CD4-positive, alpha-beta memory T cell (primary cell): ENCODE measurements at regions of chr17 and their contacts with region 1.

Region 1: DNA sequence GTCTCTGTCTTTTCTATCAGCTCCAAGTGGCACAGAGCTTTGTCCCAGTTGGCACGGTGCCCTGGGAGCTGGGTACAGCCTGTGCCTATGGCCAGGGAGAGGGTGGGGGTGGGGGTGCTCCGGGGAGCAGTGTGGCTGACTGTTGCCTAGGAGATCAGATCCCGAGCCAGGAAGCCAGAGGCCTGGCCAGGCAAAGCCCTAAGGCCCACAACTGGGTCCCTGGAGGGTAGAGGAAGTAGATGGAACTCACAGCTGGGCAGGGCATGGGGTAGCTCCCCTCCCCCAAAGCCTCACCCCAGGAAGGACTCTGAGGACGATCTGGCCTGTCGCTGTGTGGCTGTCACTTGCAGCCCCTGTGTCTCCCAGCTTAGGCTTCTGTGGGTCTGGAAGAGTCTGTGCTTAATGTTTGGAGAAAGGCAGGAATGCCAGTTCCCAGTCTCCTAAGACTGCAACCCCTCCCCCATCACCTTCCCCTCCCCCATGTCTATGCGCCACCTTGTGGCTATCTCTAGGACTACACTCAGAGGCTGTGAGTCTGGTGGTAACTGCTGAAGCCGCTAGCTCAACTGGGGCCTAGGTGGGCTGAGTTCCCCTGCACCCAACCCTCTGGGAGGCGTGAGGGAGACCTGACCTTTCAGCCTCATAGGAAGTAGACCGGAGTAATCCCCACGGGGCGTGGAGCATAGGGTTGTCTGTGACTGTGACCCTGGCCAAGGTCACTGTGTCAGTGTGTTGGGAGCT is 12.6 kb downstream of the THRA start:
- DNase-seq: peak; percentile 59 to 71 (median 63)
- H3K4me3 ChIP-seq: no peak overlapping the region
- H3K4me3 Mint-ChIP-seq: peak overlapping the region in 7 of 8 donors; percentile 17 to 80 (median 35)
- H3K27ac ChIP-seq: peak overlapping the region; percentile 8
- H3K27ac Mint-ChIP-seq: peak overlapping the region; percentile 60 to 93 (median 77)
- H3K4me1 ChIP-seq: peaks cover 38% of the 10 kb centered on the region
- H3K4me1 Mint-ChIP-seq: peaks cover 20 to 45% (median 33%) of the 10 kb centered on the region in 4 donors
- H3K27me3 ChIP-seq: no peaks in the 10 kb centered on the region
- H3K27me3 Mint-ChIP-seq: no peaks in the 10 kb centered on the region

Region 2: DNA sequence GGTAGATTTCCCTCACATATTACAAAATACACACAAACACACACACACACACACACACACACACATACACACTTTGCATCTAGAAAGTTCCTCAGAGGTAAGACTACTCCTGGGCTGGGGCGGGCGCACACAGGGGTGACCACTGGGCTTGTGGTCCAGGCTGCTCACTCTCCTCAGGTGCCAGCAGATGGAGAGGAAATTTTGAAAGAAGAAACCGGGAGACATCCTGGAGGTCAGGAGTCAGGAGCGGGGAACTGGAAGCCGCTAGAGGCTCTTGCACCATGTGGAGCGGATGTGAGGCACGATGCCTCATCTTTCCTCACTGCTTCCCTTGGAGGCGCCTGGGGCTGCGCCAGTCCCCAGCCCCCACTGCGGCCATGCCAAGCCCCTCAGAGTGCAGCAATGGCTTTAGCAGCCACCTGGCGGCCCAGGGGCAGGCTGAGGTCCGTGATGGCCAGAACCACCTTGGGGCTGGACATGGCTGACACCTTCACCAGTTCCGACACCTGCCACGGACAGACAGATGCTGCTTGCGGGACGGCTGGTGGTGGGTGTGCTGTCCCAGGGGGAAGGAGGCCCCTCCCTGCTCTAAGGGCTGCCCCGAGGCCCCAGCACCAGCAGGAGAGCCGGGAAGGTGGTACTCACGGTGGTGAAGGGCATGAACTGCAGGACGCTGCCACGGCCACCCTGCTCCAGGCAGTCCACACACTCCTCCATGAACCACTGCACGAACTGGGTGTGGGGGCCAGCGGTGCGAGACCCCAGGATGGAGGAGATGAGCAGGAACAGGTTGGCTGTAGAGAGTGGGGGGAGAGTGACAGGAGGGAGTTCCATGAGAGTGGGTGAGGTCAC is 56.0 kb before region 1 on chr17:
- CTCF ChIA-PET with region 1: interaction called, 20 read pairs
- POLR2A ChIA-PET with region 1: no interaction called
- intact Hi-C with region 1: no loop called
- DNase-seq: no peak
- H3K4me3 ChIP-seq: no peak overlapping the region
- H3K4me3 Mint-ChIP-seq: no peak overlapping the region
- H3K27ac ChIP-seq: no peak overlapping the region
- H3K27ac Mint-ChIP-seq: peak overlapping the region in 2 of 7 donors; percentile 57 to 68
- H3K4me1 ChIP-seq: no peaks in the 10 kb centered on the region
- H3K4me1 Mint-ChIP-seq: no peaks in the 10 kb centered on the region
- H3K27me3 ChIP-seq: no peaks in the 10 kb centered on the region
- H3K27me3 Mint-ChIP-seq: no peaks in the 10 kb centered on the region

Region 3: GRCh38 chr17:40062329-40063186 is 12.8 kb before region 1 on chr17 and contains the start of gene THRA:
- CTCF ChIA-PET with region 1: interaction called, 139 read pairs
- POLR2A ChIA-PET with region 1: interaction called, 21 read pairs
- intact Hi-C with region 1: no loop called
- DNase-seq: peak; percentile 71 to 75 (median 73)
- H3K4me3 ChIP-seq: peak within 1 kb of the TSS; percentile 57 to 70
- H3K4me3 Mint-ChIP-seq: peak within 1 kb of the TSS; percentile 90 to 96 (median 94)
- H3K27ac ChIP-seq: peak within 1 kb of the TSS; percentile 70
- H3K27ac Mint-ChIP-seq: peak within 1 kb of the TSS; percentile 81 to 96 (median 91)
- H3K4me1 ChIP-seq: peaks cover 49% of the 10 kb centered on the region
- H3K4me1 Mint-ChIP-seq: peaks cover 33 to 53% (median 42%) of the 10 kb centered on the region in 4 donors
- H3K27me3 ChIP-seq: peaks cover 3% of the 10 kb centered on the region
- H3K27me3 Mint-ChIP-seq: peaks cover 1% of the 10 kb centered on the region in 2 donors
- total RNA-seq, gene THRA: 35.9 to 41.3 TPM

Region 4: GRCh38 chr17:40092581-40092980 is 17.2 kb after region 1 on chr17:
- CTCF ChIA-PET with region 1: interaction called, 543 read pairs
- POLR2A ChIA-PET with region 1: interaction called, 304 read pairs
- intact Hi-C with region 1: no loop called
- DNase-seq: peak in 1 of 5 donors; percentile 5
- H3K4me3 ChIP-seq: no peak overlapping the region
- H3K4me3 Mint-ChIP-seq: peak overlapping the region in 2 of 8 donors; percentile 32 to 36
- H3K27ac ChIP-seq: no peak overlapping the region
- H3K27ac Mint-ChIP-seq: peak overlapping the region in 2 of 7 donors; percentile 29 to 74
- H3K4me1 ChIP-seq: peaks cover 42% of the 10 kb centered on the region
- H3K4me1 Mint-ChIP-seq: peaks cover 37 to 51% (median 39%) of the 10 kb centered on the region in 4 donors
- H3K27me3 ChIP-seq: no peaks in the 10 kb centered on the region
- H3K27me3 Mint-ChIP-seq: no peaks in the 10 kb centered on the region

Region 5: DNA sequence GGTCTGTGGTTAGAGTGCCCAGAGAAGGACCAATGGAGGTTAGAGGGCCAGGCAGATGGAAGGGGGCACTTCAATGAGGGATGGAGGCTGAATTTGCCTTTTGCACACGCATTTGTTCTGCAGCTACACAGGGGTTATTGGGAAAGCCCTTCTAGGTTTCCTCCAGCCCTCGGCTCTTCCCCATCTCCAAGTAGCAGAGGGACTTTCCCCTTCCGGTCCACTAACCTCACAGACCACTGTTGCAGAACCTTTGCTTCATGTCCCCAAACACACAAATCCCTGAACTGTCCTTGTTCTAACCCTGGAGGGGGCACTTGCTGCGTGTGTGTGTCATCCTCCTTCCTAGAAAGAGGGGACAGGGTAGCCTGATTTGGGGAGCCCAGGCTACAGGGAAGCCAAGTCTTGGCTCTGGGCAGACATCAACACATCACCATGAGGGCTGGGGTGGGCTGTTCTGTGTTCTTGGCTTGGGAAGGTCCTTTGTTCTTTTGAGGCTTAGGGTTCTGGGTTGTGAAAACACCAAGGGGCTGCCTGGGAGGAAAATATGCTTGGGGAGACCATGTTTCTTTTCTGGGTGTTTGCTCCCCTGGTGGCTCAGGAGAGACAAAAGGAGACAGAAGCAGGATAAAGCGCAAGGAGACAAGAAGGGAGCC is 32.3 kb after region 1 on chr17:
- CTCF ChIA-PET with region 1: interaction called, 543 read pairs
- POLR2A ChIA-PET with region 1: interaction called, 304 read pairs
- intact Hi-C with region 1: loop called (anchors 1 kb)
- DNase-seq: peak in 1 of 5 donors; percentile 57
- H3K4me3 ChIP-seq: peak overlapping the region in 1 of 2 donors; percentile 1
- H3K4me3 Mint-ChIP-seq: peak overlapping the region; percentile 56 to 81 (median 76)
- H3K27ac ChIP-seq: peak overlapping the region; percentile 85
- H3K27ac Mint-ChIP-seq: peak overlapping the region; percentile 97 to 100 (median 98)
- H3K4me1 ChIP-seq: peaks cover 100% of the 10 kb centered on the region
- H3K4me1 Mint-ChIP-seq: peaks cover 83 to 100% (median 93%) of the 10 kb centered on the region in 4 donors
- H3K27me3 ChIP-seq: no peaks in the 10 kb centered on the region
- H3K27me3 Mint-ChIP-seq: no peaks in the 10 kb centered on the region

Region 6: GRCh38 chr17:40168262-40168832 is 93.0 kb after region 1 on chr17:
- CTCF ChIA-PET with region 1: interaction called, 13 read pairs
- POLR2A ChIA-PET with region 1: no interaction called
- intact Hi-C with region 1: no loop called
- DNase-seq: peak in 4 of 5 donors; percentile 62 to 68 (median 64)
- H3K4me3 ChIP-seq: no peak overlapping the region
- H3K4me3 Mint-ChIP-seq: no peak overlapping the region
- H3K27ac ChIP-seq: no peak overlapping the region
- H3K27ac Mint-ChIP-seq: peak overlapping the region; percentile 57 to 94 (median 89)
- H3K4me1 ChIP-seq: no peaks in the 10 kb centered on the region
- H3K4me1 Mint-ChIP-seq: peaks cover 4 to 15% (median 6%) of the 10 kb centered on the region in 4 donors
- H3K27me3 ChIP-seq: no peaks in the 10 kb centered on the region
- H3K27me3 Mint-ChIP-seq: no peaks in the 10 kb centered on the region

Region 7: DNA sequence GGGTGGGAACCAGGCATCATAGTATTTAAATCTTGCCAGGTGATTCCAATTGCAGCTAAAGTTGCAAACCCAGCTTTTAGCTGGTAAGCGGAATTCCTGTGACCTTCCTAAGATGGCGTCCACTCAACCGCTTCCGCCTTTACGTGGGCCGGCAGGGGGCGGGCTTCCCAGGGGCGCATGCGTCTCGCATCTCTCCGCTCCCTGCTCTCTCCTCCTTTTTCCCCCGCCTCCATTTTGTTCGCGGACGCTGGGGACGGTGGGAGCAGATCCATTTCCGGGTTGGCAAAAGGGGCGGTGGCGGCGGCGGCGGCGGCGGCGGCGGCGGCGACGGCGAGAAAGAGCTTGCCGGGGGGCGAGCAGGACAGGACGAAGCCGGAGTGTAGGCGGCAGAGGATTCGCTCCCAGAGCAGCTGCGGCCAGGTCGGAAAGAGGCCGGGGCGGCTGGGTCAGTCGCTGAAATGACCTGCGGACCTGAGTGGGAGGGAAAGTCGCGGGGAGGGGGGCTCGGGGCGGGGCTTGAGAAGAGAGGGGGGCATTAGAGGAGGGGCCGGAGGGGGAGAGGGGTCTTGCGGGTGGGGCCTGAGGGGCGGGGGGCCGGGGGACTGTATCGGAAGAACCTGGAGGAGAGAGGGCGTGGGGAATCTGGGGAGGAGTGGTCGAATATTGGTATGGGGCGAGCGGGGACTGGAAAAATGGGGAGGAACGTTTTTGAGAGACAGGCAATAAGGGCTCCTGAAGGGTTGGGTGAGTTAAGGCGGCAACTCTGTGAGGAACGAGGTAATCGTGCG is 143.9 kb after region 1 on chr17 and contains the start of gene WIPF2:
- CTCF ChIA-PET with region 1: no interaction called
- POLR2A ChIA-PET with region 1: no interaction called
- intact Hi-C with region 1: no loop called
- DNase-seq: peak; percentile 94 to 97 (median 95)
- H3K4me3 ChIP-seq: peak within 1 kb of the TSS; percentile 59 to 71
- H3K4me3 Mint-ChIP-seq: peak within 1 kb of the TSS; percentile 92 to 100 (median 98)
- H3K27ac ChIP-seq: peak within 1 kb of the TSS; percentile 96
- H3K27ac Mint-ChIP-seq: peak within 1 kb of the TSS; percentile 93 to 100 (median 100)
- H3K4me1 ChIP-seq: peaks cover 26% of the 10 kb centered on the region
- H3K4me1 Mint-ChIP-seq: peaks cover 23 to 49% (median 33%) of the 10 kb centered on the region in 4 donors
- H3K27me3 ChIP-seq: no peaks in the 10 kb centered on the region
- H3K27me3 Mint-ChIP-seq: no peaks in the 10 kb centered on the region
- total RNA-seq, gene WIPF2: 34.4 to 34.7 TPM